ENCODE measurements at regions of chr11 and their contacts with region 1.

Region 1: GRCh38 chr11:30128269-30128932 is 102.4 kb upstream of the FSHB start:
- DNase-seq: no peak
- H3K4me3 Mint-ChIP-seq: no peak overlapping the region
- H3K27ac Mint-ChIP-seq: no peak overlapping the region
- H3K4me1 Mint-ChIP-seq: no peaks in the 10 kb centered on the region
- H3K27me3 Mint-ChIP-seq: no peaks in the 10 kb centered on the region

Region 2: GRCh38 chr11:30100514-30100913 is 27.9 kb before region 1 on chr11:
- CTCF ChIA-PET with region 1: no interaction called
- POLR2A ChIA-PET with region 1: no interaction called
- DNase-seq: no peak
- H3K4me3 Mint-ChIP-seq: no peak overlapping the region
- H3K27ac Mint-ChIP-seq: no peak overlapping the region
- H3K4me1 Mint-ChIP-seq: peaks cover 2% of the 10 kb centered on the region
- H3K27me3 Mint-ChIP-seq: no peaks in the 10 kb centered on the region

Region 3: DNA sequence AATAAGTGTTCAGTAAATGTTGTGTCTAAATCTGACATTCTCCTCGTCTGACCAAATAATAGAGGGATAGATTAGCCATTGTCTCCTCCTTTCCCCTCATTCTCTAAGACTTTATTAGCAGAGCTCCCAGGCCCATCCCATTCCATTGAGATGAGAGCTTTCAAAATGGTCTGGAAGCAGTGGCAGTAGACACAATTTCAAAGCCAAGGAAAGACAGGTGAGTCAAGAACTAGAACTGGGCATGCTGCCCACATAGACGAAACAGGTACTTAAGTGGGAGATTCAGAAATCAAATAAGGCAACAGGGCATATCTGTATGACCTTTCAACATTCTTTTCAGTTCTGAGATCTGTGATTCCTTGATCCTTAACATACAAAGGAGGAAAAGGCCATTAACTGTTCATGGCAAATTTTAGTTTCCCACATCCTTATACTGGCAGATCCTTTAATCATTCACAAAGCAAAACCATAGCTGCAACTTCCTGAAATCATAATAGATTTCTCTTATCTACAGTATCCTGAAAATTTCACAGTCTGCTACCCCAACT is 15.0 kb before region 1 on chr11:
- CTCF ChIA-PET with region 1: no interaction called
- POLR2A ChIA-PET with region 1: no interaction called
- DNase-seq: no peak
- H3K4me3 Mint-ChIP-seq: no peak overlapping the region
- H3K27ac Mint-ChIP-seq: no peak overlapping the region
- H3K4me1 Mint-ChIP-seq: no peaks in the 10 kb centered on the region
- H3K27me3 Mint-ChIP-seq: no peaks in the 10 kb centered on the region

Region 4: DNA sequence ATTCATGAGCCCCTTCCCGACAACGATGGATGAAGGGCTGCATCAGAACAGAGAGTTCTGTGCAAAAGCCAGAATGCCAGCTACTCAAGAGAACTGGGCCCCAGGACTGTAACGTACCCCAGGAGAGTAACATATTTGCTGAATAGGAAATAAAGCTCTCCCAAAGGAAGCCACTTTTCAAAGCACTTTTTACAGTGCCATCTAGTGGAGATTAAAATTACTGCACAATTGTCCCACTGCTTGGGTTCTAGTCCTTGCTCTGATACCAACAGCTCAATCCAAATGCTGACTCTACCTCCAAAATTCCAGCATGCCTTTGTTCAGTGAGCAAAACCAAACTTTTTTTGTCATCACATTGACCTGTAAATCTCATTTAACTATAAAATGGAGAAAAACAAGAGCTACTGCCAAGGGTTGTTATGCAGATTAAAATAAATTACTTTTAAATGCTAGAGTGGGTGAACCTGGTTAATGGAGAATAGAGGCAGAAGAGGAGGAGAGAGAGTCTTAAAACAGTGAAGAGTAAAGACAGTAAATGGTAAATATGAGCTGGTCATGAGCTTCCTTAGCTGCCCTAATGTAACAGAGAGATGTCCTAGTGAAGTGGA is 14.8 kb after region 1 on chr11:
- CTCF ChIA-PET with region 1: interaction called, 14 read pairs
- POLR2A ChIA-PET with region 1: no interaction called
- DNase-seq: no peak
- H3K4me3 Mint-ChIP-seq: no peak overlapping the region
- H3K27ac Mint-ChIP-seq: no peak overlapping the region
- H3K4me1 Mint-ChIP-seq: no peaks in the 10 kb centered on the region
- H3K27me3 Mint-ChIP-seq: no peaks in the 10 kb centered on the region